ENCODE measurements at regions of chr2 and their contacts with region 1.

Region 1: GRCh38 chr2:229244975-229245374 is 26.1 kb downstream of the PID1 start:
- DNase-seq: no peak
- H3K4me3 ChIP-seq: no peak overlapping the region
- H3K27ac ChIP-seq: peak overlapping the region; percentile 16 to 34
- H3K4me1 ChIP-seq: peaks cover 2 to 45% of the 10 kb centered on the region in 2 donors
- H3K27me3 ChIP-seq: no peaks in the 10 kb centered on the region
- CTCF ChIP-seq: no peak

Region 2: DNA sequence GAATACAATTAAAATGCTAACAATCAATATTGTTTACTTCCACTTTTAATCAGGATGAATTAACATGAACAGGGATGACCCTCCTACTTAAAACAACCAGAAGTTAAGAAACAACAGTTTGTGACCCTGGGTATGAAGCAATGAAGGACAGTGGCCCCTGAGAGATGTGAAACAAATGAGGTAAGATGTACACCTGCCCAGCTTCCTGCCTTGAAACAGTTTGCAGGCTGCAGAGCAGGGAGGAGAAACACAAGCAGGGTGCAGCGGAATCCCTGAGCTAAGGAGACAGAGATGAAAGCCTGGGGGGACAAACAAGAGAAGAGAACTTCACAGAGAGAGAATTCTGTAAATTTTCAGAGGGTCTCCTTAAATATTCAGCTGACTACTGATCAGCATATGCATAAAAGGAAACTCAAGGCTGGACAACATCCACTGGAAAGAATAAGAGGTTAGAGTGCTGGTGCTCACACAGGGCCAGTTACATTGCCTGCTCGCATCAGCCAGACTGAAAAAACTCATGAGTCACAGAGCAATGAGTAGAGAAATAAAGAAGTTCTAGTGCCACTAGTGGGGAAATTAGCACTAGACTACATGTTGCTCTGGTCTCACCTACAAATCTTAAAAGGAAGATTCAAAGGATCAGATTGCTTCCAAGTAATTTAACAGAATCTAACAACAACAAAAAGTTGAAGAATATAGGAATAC is 80.3 kb before region 1 on chr2:
- intact Hi-C with region 1: loop called (anchors 5 kb)
- DNase-seq: no peak
- H3K4me3 ChIP-seq: no peak overlapping the region
- H3K27ac ChIP-seq: peak overlapping the region in 1 of 2 donors; percentile 20
- H3K4me1 ChIP-seq: peaks cover 15 to 50% of the 10 kb centered on the region in 2 donors
- H3K27me3 ChIP-seq: no peaks in the 10 kb centered on the region
- CTCF ChIP-seq: peak in 1 of 3 experiments; percentile 33

Region 3: DNA sequence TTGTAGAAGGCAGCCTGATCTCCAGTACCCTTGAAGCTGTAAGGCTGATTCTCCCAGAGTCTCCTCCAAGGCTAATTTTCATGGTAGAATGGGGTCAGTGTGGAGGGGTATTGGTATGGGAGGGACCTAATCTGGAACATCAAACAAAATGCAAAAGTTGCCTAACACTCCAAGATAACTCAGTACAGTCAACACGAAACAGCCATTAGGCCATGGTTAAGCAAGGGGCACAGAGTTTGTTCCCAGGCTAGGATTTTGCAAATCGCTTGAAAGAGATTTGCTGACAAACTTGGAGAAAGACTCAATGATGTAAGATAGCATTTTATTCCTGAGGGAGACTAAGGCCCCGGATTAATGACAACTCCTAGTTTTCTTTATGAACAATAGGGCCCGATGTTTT is 20.8 kb after region 1 on chr2:
- intact Hi-C with region 1: loop called (anchors 2 kb)
- DNase-seq: no peak
- H3K4me3 ChIP-seq: peak overlapping the region; percentile 31 to 92
- H3K27ac ChIP-seq: peak overlapping the region; percentile 91 to 95
- H3K4me1 ChIP-seq: peaks cover 5 to 19% of the 10 kb centered on the region in 2 donors
- H3K27me3 ChIP-seq: no peaks in the 10 kb centered on the region
- CTCF ChIP-seq: no peak

Region 4: DNA sequence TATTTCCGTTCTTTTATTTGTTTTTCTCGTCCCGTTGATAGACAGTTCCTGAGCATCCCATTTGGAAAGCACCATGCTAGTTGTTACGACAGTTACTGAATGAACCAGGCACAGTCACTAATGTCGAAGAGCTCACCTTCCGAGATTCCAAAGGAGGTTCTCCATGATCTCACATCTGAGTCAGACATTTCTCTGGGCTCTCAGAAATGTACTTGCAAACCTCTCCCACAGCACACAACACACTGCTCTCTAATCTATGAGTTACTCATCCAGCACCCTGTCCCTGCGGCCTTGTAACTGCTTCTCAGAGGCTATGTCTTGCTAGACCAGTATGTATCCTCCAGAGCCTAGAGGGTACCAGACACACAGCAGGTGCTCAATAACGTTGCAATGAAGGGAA is 294.7 kb after region 1 on chr2:
- intact Hi-C with region 1: no loop called
- DNase-seq: no peak
- H3K4me3 ChIP-seq: no peak overlapping the region
- H3K27ac ChIP-seq: no peak overlapping the region
- H3K4me1 ChIP-seq: no peaks in the 10 kb centered on the region
- H3K27me3 ChIP-seq: no peaks in the 10 kb centered on the region
- CTCF ChIP-seq: no peak